Naive thymus-derived CD8-positive, alpha-beta T cell (primary cell): ENCODE measurements at regions of chr17 and their contacts with region 1.

Region 1: DNA sequence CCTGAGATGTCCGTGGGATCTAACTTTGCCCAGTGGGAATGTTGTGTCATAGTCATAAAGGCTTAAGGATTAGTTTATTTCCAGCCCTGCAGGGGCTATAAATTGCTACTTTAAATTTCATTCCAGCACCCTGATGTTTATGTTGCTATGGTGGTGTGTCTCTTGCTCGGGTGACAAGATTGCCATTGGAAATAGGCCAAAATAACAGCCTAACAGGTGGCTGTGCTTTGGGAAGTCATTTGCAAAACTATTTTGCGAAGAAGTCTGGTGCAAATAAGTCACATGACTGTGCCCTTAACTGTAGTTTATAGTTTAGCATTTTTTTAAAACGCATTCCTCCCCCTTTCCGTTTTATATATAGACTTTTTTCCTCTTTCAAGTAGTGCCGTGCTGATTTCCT is 23.1 kb downstream of the PITPNC1 start:
- DNase-seq: peak in 4 of 10 donors; percentile 50 to 74 (median 66)
- ATAC-seq: peak; percentile 51 to 52
- H3K4me3 Mint-ChIP-seq: peak overlapping the region; percentile 65 to 92 (median 82)
- H3K27ac Mint-ChIP-seq: peak overlapping the region; percentile 91 to 100 (median 97)
- H3K4me1 Mint-ChIP-seq: peaks cover 25 to 85% (median 74%) of the 10 kb centered on the region in 4 donors
- H3K27me3 Mint-ChIP-seq: no peaks in the 10 kb centered on the region

Region 2: DNA sequence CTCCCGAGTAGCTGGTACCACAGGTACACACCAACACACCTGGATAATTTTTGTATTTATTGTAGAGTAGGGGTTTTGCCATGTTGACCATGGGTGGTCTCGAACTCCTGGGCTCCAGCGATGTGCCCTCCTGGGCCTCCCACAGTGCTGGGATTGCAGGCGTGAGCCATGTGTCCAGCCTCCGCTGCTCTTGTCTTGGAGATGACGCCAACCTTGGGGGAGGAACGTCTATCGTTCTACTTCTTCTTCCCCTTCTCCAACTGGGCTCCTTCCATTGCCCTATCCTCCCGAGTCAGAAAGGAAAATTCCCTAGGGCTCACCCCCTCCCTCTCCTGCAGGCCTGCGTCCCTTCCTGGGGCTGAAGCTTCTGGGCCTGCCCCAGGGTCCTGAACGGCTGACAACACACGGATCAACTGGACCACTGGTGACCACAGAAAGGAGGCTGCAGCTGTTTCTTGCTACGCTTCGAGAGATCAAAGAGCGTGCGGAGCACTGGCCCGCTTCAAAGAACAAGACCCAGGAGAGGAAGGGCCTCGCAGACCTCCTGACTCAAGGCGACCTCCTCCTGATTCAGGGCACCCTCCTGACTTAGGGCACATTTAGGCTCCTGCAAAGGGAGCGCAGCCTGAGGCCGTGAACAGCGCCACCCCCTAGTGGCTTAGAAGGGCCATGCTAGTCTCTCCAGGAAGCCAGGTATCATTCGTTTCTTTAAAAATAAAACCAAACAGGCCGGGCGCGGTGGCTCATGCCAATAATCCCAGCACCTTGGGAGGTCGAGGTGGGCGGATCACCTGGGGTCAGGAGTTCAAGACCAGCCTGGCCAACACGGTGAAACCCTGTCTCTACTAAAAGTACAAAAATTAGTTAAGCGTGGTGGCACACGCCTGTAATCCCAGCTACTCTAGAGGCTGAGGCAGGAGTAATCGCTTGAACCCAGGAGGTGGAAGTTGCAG is 106.7 kb before region 1 on chr17:
- POLR2A ChIA-PET with region 1: no interaction called
- DNase-seq: peak; percentile 14 to 79 (median 54)
- ATAC-seq: peak; percentile 97
- H3K4me3 Mint-ChIP-seq: peak overlapping the region in 6 of 10 donors; percentile 38 to 60 (median 44)
- H3K27ac Mint-ChIP-seq: peak overlapping the region in 2 of 10 donors; percentile 35 to 63
- H3K4me1 Mint-ChIP-seq: peaks cover 0 to 11% (median 1%) of the 10 kb centered on the region in 4 donors
- H3K27me3 Mint-ChIP-seq: peaks cover 0 to 2% (median 0%) of the 10 kb centered on the region in 5 donors

Region 3: DNA sequence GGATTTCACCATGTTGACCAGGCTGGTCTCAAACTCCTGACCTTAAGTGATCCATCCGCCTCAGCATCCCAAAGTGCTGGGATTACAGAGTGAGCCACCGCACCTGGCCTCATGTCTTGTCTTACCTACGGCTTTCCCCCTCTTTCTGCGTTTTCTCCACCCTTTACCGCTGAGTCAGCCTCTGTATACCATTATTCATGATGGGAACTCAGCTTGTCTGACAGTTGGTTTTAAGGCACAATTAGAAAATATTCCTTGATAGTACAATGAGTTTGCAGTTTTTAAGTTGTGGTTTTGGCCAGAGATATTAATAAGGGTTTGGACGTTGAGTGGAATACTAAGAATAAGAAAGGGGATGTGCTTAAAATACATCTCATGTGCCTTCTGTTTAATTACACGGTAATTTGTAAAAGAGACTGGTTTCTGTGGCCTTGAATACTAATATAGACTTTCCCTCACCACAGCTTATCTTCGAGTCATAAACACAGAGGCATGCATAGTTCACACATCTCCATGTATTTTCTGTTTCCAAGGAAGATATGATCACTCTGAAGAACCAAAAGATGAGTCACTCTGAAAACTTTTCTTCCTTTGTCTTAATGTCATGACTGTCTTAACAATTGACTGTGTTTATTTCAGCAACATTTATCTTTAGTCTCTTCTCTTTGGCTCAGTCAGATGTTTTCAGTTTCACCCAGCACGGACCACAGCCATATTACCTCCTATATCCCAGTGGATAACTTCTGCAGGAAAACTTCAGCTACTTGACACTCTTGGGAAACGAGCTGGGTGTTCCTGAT is 31.3 kb after region 1 on chr17:
- POLR2A ChIA-PET with region 1: interaction called, 11 read pairs
- DNase-seq: no peak
- ATAC-seq: peak in 1 of 2 donors; percentile 4
- H3K4me3 Mint-ChIP-seq: peak overlapping the region in 5 of 10 donors; percentile 1 to 36 (median 21)
- H3K27ac Mint-ChIP-seq: peak overlapping the region; percentile 63 to 93 (median 88)
- H3K4me1 Mint-ChIP-seq: peaks cover 31 to 82% (median 70%) of the 10 kb centered on the region in 4 donors
- H3K27me3 Mint-ChIP-seq: no peaks in the 10 kb centered on the region

Region 4: DNA sequence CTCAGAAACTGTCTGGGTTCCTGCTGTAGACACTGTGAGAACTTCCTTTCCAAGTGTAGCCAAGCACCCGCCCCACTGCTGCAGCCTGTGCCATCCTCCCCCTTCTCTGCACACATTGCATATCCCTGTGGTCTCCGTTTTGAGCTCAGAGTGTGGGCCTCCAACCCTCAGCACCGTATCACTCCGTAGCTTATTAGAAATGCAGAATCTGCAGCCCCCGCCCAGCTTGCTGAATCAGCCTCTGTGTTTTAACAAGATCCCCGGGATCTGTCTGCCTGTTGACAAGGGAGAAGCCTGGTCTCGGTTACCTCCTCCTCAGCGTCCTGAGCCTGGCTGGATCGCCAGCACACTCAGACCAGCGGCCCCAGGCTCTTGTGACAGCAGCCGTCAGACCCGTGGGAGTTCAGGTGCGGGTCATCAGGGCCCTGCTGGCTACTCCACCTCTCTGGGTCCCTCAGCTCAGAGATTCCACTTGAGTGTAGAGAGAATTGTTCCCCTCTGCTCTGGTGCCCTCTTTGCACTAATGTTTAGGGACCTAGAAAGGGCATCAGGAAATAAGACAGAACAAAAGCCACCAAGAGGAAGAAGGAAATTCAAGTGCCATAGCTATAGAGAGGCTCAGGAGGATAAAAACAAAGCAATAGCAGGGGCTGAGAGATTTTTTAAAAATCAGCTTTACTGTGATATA is 69.2 kb after region 1 on chr17:
- POLR2A ChIA-PET with region 1: interaction called, 12 read pairs
- DNase-seq: peak in 8 of 10 donors; percentile 26 to 77 (median 43)
- ATAC-seq: peak; percentile 82 to 85
- H3K4me3 Mint-ChIP-seq: peak overlapping the region; percentile 72 to 92 (median 84)
- H3K27ac Mint-ChIP-seq: peak overlapping the region; percentile 87 to 100 (median 96)
- H3K4me1 Mint-ChIP-seq: peaks cover 38 to 80% (median 73%) of the 10 kb centered on the region in 4 donors
- H3K27me3 Mint-ChIP-seq: no peaks in the 10 kb centered on the region

Region 5: DNA sequence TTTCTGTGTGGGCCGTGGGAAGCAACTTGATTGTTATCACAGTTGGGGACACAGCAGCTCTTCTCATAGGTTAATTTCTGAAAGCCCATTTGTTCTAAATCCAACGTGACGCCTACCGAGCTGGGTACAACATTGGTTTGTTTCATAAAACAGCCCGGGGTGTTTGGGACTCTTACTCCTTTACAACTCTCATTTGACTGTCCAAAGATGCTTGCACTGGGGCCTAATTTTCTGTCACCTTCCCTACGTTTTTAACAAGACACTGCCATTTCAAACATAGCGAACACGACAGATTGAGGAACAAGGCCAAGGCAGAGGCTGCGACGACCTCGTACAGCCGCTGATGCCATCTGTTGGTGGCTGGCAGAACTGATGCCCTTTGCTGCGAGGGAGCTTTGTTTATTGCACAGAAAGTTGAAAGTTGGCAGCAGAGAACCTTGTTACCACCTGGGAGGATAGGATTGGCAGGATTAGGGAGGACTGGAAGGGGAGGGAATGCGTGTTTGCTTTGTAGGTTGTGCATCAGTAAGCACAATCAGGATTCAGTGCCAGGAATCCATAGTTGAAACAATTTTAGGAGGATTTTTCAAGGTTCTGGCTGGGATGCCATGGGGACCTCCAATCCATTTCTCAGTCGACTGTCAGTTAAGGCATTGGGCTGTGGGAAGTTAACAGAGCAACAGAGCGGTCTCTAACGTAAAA is 75.2 kb after region 1 on chr17:
- POLR2A ChIA-PET with region 1: interaction called, 10 read pairs
- DNase-seq: peak; percentile 68 to 91 (median 85)
- ATAC-seq: peak; percentile 70 to 75
- H3K4me3 Mint-ChIP-seq: peak overlapping the region; percentile 66 to 84 (median 76)
- H3K27ac Mint-ChIP-seq: peak overlapping the region; percentile 90 to 98 (median 96)
- H3K4me1 Mint-ChIP-seq: peaks cover 49 to 79% (median 71%) of the 10 kb centered on the region in 4 donors
- H3K27me3 Mint-ChIP-seq: no peaks in the 10 kb centered on the region

Region 6: GRCh38 chr17:67492251-67492740 is 92.1 kb after region 1 on chr17:
- POLR2A ChIA-PET with region 1: interaction called, 11 read pairs
- DNase-seq: no peak
- ATAC-seq: peak in 1 of 2 donors; percentile 31
- H3K4me3 Mint-ChIP-seq: peak overlapping the region in 9 of 10 donors; percentile 17 to 70 (median 40)
- H3K27ac Mint-ChIP-seq: peak overlapping the region in 9 of 10 donors; percentile 17 to 85 (median 72)
- H3K4me1 Mint-ChIP-seq: peaks cover 45 to 84% (median 79%) of the 10 kb centered on the region in 4 donors
- H3K27me3 Mint-ChIP-seq: no peaks in the 10 kb centered on the region